ENCODE measurements at regions of chr16 and their contacts with region 1.

Region 1: GRCh38 chr16:46908540-46909372 is 24.6 kb downstream of the GPT2 start:
- DNase-seq: peak; percentile 64
- ATAC-seq: peak; percentile 62
- H3K4me3 ChIP-seq: no peak overlapping the region
- H3K27ac ChIP-seq: no peak overlapping the region
- H3K4me1 ChIP-seq: no peaks in the 10 kb centered on the region
- H3K27me3 ChIP-seq: no peaks in the 10 kb centered on the region
- CTCF ChIP-seq: peak; percentile 60

Region 2: DNA sequence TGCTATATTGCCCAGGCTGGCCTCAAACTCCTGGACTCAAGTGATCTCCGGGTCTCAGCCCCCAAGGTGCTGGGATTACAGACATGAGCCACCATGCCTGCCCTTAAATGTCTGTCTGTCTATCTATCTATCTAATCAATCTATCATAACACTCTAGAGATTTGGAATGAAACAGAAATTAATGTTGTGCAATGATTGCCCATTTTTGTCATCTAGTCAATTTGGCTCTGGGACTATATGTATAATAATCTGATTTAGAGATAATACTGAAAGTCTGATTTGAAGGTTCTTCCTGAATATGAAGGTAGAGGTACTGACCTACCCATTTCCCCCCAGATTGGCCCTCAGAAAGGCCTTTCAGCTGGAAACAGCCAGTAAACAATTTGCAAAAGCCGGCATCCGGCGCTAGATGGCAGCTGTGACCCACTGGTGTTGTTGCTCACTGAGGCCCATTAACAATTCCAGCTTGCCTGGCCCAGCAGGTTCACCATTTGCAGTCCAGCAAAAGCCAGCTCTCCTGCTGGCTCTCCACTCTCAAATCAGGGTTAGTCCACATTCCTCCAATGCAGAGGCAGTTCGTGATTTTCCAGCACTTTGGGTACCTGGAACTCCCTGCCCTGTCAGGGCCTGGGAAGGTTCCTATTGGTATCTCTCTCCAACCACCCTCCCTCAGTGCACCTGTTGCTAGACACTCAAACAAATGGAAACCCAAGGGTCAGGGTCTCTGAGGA is 54.9 kb before region 1 on chr16:
- CTCF ChIA-PET with region 1: interaction called, 15 read pairs
- POLR2A ChIA-PET with region 1: no interaction called
- intact Hi-C with region 1: loop called (anchors 1 kb)
- DNase-seq: peak; percentile 66
- ATAC-seq: peak; percentile 82
- H3K4me3 ChIP-seq: no peak overlapping the region
- H3K27ac ChIP-seq: no peak overlapping the region
- H3K4me1 ChIP-seq: no peaks in the 10 kb centered on the region
- H3K27me3 ChIP-seq: no peaks in the 10 kb centered on the region
- CTCF ChIP-seq: peak; percentile 86

Region 3: GRCh38 chr16:46883690-46884512 is 24.9 kb before region 1 on chr16 and contains the start of gene GPT2:
- CTCF ChIA-PET with region 1: interaction called, 13 read pairs
- POLR2A ChIA-PET with region 1: no interaction called
- intact Hi-C with region 1: no loop called
- DNase-seq: peak; percentile 95
- ATAC-seq: peak; percentile 97
- H3K4me3 ChIP-seq: peak within 1 kb of the TSS; percentile 89
- H3K27ac ChIP-seq: no peak within 1 kb of the TSS
- H3K4me1 ChIP-seq: peaks cover 16% of the 10 kb centered on the region
- H3K27me3 ChIP-seq: no peaks in the 10 kb centered on the region
- CTCF ChIP-seq: no peak
- total RNA-seq, gene GPT2: 19.4 and 22.0 TPM in 2 replicates

Measured in PC-3 (cell line).